ENCODE measurements at regions of chr16 and their contacts with region 1.

Region 1: GRCh38 chr16:1525871-1526607 is 7.4 kb upstream of the TMEM204 start:
- DNase-seq: peak; percentile 34
- H3K4me3 Mint-ChIP-seq: peak overlapping the region; percentile 56
- H3K27ac Mint-ChIP-seq: peak overlapping the region; percentile 45
- H3K4me1 Mint-ChIP-seq: peaks cover 26% of the 10 kb centered on the region
- H3K27me3 Mint-ChIP-seq: no peaks in the 10 kb centered on the region

Region 2: DNA sequence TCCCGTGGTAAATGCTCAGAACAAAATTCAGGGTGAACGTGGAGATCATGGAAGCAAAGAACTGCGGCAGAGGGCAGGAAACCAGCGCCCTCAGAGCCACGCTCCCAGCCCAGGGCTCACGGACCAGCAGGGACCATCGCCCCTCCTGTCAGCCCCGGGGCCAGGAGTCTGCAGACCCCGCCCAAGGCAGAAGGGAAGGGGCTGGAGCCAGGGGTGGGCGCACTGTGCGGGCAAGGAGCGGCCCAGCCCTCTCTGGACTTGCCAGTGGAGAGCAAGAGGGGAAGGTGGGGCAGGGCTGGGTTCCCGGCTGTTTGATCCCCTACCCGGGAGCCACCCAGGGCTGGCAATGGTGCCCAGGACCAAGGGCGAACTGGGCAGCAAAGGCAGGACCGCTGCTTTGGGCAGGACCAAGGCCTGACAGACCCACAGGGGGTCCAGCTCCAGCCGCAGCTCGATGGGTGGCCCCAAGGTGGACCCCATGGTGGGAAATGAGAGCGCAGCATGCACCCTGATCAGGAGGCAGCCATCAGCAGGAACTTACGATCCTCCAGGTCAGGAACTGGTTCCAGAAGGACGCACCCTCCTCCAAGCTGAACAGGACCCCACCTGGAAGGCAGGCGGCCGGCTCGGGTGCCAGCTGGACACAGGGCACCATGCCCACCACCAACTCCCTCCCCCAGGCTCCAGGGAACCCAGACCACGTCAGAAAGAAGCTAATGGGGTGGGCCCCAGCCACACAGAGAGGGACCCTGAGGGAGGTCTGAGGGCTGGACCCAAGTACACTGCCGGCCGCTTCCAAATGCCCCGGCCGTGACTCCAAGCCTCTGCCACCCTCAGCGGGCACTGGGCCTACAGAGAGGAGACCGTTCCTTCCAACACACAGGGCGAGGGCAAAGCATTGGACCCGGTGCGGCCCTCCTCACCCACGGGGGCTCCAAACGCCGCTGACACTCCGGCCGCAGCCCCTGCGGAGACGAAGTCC is 70.6 kb before region 1 on chr16:
- CTCF ChIA-PET with region 1: no interaction called
- POLR2A ChIA-PET with region 1: no interaction called
- intact Hi-C with region 1: loop called (anchors 2 kb)
- DNase-seq: no peak
- H3K4me3 Mint-ChIP-seq: no peak overlapping the region
- H3K27ac Mint-ChIP-seq: no peak overlapping the region
- H3K4me1 Mint-ChIP-seq: peaks cover 14% of the 10 kb centered on the region
- H3K27me3 Mint-ChIP-seq: no peaks in the 10 kb centered on the region

Region 3: DNA sequence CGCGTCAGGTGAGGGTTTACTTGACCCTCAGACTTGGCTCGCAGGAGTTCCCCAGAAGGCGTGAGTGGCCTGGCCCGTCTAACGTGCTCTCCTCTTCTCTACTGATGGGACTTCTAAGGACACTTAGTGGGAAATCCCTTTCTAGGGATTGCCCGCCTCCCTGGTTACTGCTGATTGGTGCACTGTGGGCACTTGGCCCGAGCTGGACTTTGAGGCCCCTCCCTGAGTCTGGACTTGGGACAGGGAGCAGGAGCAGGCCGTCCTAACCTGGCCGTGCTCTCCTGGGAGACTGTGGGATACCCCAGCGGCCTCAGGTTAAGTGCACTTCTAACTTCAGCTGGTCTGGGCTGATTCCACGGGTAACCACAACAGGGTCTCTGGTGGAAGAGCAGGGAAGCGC is 71.1 kb after region 1 on chr16:
- CTCF ChIA-PET with region 1: no interaction called
- POLR2A ChIA-PET with region 1: no interaction called
- intact Hi-C with region 1: no loop called
- DNase-seq: no peak
- H3K4me3 Mint-ChIP-seq: no peak overlapping the region
- H3K27ac Mint-ChIP-seq: no peak overlapping the region
- H3K4me1 Mint-ChIP-seq: no peaks in the 10 kb centered on the region
- H3K27me3 Mint-ChIP-seq: no peaks in the 10 kb centered on the region

Measured in activated CD4-positive, alpha-beta memory T cell treated with anti-CD3 and anti-CD28 coated beads for 36 hours (primary cell).